Activated CD4-positive, alpha-beta T cell treated with anti-CD3 and anti-CD28 coated beads, Interleukin-2, amount 10 ng/mL, durations not matched to agents 24 days and 14 days (primary cell): ENCODE measurements at regions of chr12 and their contacts with region 1.

Region 1: GRCh38 chr12:21438643-21439042 is 1.2 kb downstream of the PYROXD1 start:
- DNase-seq: no peak
- H3K4me3 Mint-ChIP-seq: peak overlapping the region; percentile 95
- H3K27ac Mint-ChIP-seq: peak overlapping the region; percentile 97
- H3K4me1 Mint-ChIP-seq: peaks cover 34% of the 10 kb centered on the region
- H3K27me3 Mint-ChIP-seq: peaks cover 5% of the 10 kb centered on the region

Region 2: GRCh38 chr12:21324551-21324950 is 114.1 kb before region 1 on chr12:
- intact Hi-C with region 1: loop called (anchors 10 kb)
- DNase-seq: no peak
- H3K4me3 Mint-ChIP-seq: no peak overlapping the region
- H3K27ac Mint-ChIP-seq: no peak overlapping the region
- H3K4me1 Mint-ChIP-seq: no peaks in the 10 kb centered on the region
- H3K27me3 Mint-ChIP-seq: no peaks in the 10 kb centered on the region

Region 3: GRCh38 chr12:21456291-21456780 is 17.7 kb after region 1 on chr12:
- intact Hi-C with region 1: loop called (anchors 1 kb)
- DNase-seq: peak; percentile 88
- H3K4me3 Mint-ChIP-seq: peak overlapping the region; percentile 59
- H3K27ac Mint-ChIP-seq: peak overlapping the region; percentile 97
- H3K4me1 Mint-ChIP-seq: peaks cover 50% of the 10 kb centered on the region
- H3K27me3 Mint-ChIP-seq: no peaks in the 10 kb centered on the region

Region 4: GRCh38 chr12:21476949-21477348 is 38.3 kb after region 1 on chr12:
- intact Hi-C with region 1: loop called (anchors 5 kb)
- DNase-seq: no peak
- H3K4me3 Mint-ChIP-seq: peak overlapping the region; percentile 34
- H3K27ac Mint-ChIP-seq: peak overlapping the region; percentile 81
- H3K4me1 Mint-ChIP-seq: peaks cover 11% of the 10 kb centered on the region
- H3K27me3 Mint-ChIP-seq: no peaks in the 10 kb centered on the region

Region 5: DNA sequence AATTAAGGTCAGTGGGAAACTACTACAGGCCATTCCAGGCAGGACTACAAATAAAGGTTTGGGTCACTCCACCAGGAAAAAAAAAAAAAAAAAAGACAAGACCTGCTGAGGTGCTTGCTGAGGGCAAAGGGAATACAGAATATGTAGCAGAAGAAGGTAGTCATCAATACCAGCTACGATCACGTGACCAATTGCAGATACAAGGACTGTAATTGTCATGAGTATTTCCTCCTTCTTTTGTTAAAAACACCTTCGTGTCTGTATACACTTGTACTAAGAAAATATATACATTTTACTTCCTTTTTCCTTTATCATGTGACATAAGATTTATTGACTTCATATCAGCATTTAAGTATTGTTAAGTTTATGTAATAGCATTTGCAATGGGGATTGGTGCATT is 146.8 kb after region 1 on chr12:
- intact Hi-C with region 1: no loop called
- DNase-seq: no peak
- H3K4me3 Mint-ChIP-seq: no peak overlapping the region
- H3K27ac Mint-ChIP-seq: no peak overlapping the region
- H3K4me1 Mint-ChIP-seq: no peaks in the 10 kb centered on the region
- H3K27me3 Mint-ChIP-seq: no peaks in the 10 kb centered on the region

Region 6: GRCh38 chr12:21613931-21614330 is 175.3 kb after region 1 on chr12:
- intact Hi-C with region 1: loop called (anchors 2 kb)
- DNase-seq: no peak
- H3K4me3 Mint-ChIP-seq: no peak overlapping the region
- H3K27ac Mint-ChIP-seq: no peak overlapping the region
- H3K4me1 Mint-ChIP-seq: peaks cover 36% of the 10 kb centered on the region
- H3K27me3 Mint-ChIP-seq: no peaks in the 10 kb centered on the region

Region 7: DNA sequence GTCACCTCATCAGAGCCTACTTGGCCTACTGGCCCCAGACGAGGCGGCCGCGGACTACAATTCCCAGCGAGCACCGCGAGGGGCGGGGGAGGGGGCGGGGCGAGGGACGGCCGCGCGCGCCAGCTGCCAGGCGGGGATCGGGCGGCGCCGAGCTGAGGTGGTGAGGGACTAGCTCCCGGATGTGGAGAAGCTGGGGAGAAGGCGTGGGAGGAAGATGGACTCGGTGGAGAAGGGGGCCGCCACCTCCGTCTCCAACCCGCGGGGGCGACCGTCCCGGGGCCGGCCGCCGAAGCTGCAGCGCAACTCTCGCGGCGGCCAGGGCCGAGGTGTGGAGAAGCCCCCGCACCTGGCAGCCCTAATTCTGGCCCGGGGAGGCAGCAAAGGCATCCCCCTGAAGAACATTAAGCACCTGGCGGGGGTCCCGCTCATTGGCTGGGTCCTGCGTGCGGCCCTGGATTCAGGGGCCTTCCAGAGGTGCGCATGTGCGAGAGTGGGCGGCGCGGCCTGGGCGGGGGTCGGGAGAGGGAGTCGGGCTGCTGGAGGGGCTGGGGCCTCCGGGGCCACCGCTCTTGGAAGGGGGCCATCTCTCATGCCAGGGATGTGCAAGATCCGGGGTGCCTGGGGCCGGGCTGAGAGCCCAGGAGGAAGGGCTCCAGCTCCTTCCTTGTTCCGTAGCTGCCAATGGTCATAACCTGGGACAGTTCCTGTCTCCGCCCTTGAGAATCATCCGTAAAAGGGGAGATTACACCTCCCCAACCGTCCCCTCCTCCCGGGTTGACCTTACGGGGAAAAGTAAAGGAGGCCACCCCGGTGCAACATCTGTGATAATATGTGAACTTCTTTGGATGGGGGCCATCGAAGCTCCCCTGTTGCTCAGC is 607.7 kb after region 1 on chr12 and contains the start of gene CMAS:
- intact Hi-C with region 1: loop called (anchors 2 kb)
- DNase-seq: peak; percentile 92
- H3K4me3 Mint-ChIP-seq: peak within 1 kb of the TSS; percentile 98
- H3K27ac Mint-ChIP-seq: peak within 1 kb of the TSS; percentile 89
- H3K4me1 Mint-ChIP-seq: peaks cover 34% of the 10 kb centered on the region
- H3K27me3 Mint-ChIP-seq: no peaks in the 10 kb centered on the region
- total RNA-seq, gene CMAS: 32.9 and 36.7 TPM in 2 replicates